ENCODE measurements at regions of chr5 and their contacts with region 1.

Region 1: DNA sequence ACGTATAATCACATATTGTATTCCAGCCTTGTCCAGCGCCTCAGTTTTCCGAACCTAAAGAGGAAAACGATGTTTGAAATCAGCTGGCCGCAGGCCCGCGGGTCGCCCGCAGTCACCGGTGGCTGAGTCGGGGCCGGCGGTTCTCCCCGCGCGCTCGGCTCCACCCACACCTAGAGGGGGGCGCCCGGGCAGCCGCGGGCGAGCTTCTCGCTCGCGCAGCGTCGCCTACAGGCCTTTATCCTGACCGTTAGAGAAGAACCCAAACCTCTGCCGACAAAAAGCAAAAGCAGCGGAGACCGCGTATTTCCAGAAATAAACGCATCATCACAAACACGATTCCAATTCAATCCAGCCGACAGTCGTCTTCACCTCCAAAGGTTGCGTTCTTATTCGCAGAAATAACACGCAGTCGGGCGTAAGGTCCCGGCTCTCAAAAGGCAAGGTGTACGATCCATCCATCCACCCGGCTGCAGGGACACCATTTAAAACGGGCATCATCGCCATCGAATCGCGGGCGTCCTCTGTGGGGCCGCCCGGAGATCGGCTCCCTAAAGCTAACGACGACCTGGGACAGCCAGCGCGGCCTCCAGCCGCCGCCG is 680 bp upstream of the NIPBL start:
- DNase-seq: peak; percentile 88 to 92
- ATAC-seq: peak; percentile 94
- H3K4me3 ChIP-seq: peak overlapping the region; percentile 63 to 94
- H3K27ac ChIP-seq: peak overlapping the region; percentile 51 to 100
- H3K4me1 ChIP-seq: peaks cover 0 to 3% of the 10 kb centered on the region in 2 donors
- H3K27me3 ChIP-seq: no peaks in the 10 kb centered on the region

Region 2: DNA sequence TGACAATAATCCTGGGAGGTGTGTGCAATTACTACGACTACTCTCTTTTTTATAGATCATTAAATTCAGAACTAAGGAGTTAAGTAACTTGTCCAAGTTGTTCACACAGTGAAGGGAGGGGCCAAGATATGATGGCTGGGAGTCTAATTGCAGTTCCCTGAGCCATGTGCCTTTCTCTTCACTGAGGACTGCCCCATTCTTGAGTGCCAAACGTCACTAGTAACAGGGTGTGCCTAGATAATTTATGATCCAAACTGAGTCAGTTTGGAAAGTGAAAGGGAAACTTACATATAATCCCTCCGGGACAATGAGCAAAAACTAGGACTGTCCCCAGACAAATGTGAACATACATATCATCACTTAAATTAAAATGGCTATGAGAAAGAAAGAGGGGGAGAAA is 999.0 kb before region 1 on chr5:
- intact Hi-C with region 1: no loop called
- DNase-seq: no peak
- ATAC-seq: no peak
- H3K4me3 ChIP-seq: no peak overlapping the region
- H3K27ac ChIP-seq: no peak overlapping the region
- H3K4me1 ChIP-seq: no peaks in the 10 kb centered on the region
- H3K27me3 ChIP-seq: no peaks in the 10 kb centered on the region

Region 3: GRCh38 chr5:36252722-36253365 is 623.0 kb before region 1 on chr5:
- intact Hi-C with region 1: loop called in 1 of 2 experiments (anchors 10 kb)
- DNase-seq: no peak
- ATAC-seq: peak; percentile 85
- H3K4me3 ChIP-seq: no peak overlapping the region
- H3K27ac ChIP-seq: no peak overlapping the region
- H3K4me1 ChIP-seq: peaks cover 0 to 2% of the 10 kb centered on the region in 2 donors
- H3K27me3 ChIP-seq: no peaks in the 10 kb centered on the region

Region 4: DNA sequence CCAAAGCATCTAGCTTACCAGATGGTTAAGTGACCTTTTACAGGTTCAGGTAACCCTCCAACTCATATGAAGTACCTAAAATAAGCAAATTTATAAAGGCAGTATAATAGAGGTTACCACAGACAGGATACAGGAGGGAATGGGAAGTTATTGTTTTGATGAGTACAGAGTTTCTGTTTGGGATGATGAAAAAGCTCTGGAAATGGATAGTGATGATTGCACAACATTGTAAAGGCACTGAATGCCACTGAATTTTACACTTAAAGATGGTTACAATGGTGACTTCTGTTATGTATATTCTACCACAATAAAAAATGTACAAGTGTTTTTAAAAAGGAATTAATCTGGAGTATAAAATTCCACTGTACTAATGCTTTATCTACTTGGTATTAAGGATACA is 74.4 kb before region 1 on chr5:
- intact Hi-C with region 1: no loop called
- DNase-seq: no peak
- ATAC-seq: no peak
- H3K4me3 ChIP-seq: no peak overlapping the region
- H3K27ac ChIP-seq: no peak overlapping the region
- H3K4me1 ChIP-seq: no peaks in the 10 kb centered on the region
- H3K27me3 ChIP-seq: no peaks in the 10 kb centered on the region

Region 5: DNA sequence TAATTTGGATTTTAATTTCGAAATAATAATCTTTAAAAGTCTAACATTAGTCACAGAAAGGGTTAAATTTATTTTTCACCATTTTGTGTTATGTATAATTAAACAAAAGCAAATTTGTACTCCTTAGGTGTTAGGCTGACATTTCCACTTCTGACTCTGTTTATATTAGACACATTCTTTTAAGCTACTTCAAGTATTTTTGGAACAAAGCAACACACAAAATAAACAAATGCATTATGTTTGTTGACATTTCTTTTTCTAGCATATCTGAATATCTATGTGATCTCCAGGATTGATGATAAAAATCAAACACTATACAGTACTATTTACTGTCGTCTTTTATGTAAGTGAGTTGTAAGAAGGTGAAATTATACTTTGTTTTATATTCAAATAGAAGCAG is 43.6 kb before region 1 on chr5:
- intact Hi-C with region 1: no loop called
- DNase-seq: no peak
- ATAC-seq: no peak
- H3K4me3 ChIP-seq: no peak overlapping the region
- H3K27ac ChIP-seq: no peak overlapping the region
- H3K4me1 ChIP-seq: no peaks in the 10 kb centered on the region
- H3K27me3 ChIP-seq: peaks cover 0 to 2% of the 10 kb centered on the region in 2 donors

Region 6: DNA sequence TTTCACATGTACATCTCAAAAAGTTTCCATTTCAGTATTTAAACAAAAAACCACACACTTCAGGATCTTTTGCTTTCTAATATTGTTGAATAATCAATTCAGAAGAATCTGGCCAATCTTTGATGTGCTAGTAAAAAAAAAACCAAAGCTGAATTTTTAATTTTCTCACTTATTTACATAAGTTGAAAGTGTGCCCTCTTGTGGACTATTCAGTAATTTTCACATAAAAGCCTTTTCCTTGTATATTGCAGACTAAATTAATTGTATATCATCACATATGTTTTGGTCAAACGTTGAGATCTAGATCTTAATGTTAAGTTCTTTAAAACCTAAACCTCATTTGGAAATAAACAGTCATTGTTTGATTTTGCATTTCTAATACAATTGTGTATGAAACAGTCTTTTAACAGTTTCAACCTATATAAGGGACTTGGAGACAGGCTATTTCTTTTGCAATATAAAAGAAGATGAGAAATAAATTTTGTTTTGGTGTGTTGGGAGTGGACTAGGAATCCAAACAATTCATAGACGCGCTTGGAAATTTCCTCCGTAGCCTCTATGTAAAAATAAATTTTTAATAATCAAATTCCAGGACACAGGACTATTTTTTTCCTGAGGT is 68.8 kb after region 1 on chr5:
- intact Hi-C with region 1: loop called (anchors 5 to 10 kb)
- DNase-seq: no peak
- ATAC-seq: no peak
- H3K4me3 ChIP-seq: no peak overlapping the region
- H3K27ac ChIP-seq: no peak overlapping the region
- H3K4me1 ChIP-seq: peaks cover 0 to 2% of the 10 kb centered on the region in 2 donors
- H3K27me3 ChIP-seq: no peaks in the 10 kb centered on the region

Measured in aorta (tissue), 5 donors.